Calu3 (cell line): ENCODE measurements at regions of chr13 and their contacts with region 1.

Region 1: DNA sequence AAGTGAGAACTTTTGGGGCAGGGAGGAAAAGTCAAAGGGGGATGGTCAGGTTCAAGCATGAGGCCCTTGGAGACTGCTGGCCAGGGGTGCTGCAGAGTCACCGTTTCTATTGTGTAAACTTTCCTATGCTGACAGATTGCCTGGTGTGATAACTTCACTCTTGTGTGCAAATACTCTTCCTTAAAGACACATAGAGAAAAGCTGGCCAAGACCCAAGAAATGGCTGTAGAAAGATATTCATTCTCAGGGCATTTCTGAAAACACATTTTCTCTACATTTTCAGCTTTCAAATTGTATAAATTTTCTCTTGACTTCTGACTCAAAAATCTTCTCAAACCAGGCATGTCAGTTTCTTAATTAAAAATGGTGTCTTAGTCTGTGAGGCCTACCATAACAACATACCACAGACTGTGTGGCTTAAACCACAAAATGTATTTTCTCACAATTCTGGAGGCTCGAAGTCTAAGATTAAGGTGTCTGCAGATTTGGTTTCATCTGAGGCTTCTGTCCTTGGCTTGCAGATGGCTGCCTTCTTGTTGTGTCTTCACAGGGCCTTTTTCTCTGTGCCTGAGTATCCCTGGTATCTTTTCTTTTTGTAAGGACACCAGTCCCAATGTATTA is 304.5 kb downstream of the KCNRG start:
- DNase-seq: no peak
- H3K4me3 Mint-ChIP-seq: peak overlapping the region; percentile 17
- H3K27ac Mint-ChIP-seq: peak overlapping the region; percentile 50
- H3K4me1 Mint-ChIP-seq: peaks cover 23% of the 10 kb centered on the region
- H3K27me3 Mint-ChIP-seq: no peaks in the 10 kb centered on the region
- CTCF ChIP-seq: no peak

Region 2: GRCh38 chr13:50244713-50245574 is 74.8 kb before region 1 on chr13:
- CTCF ChIA-PET with region 1: no interaction called
- intact Hi-C with region 1: loop called (anchors 2 kb)
- DNase-seq: peak; percentile 59
- H3K4me3 Mint-ChIP-seq: no peak overlapping the region
- H3K27ac Mint-ChIP-seq: peak overlapping the region; percentile 75
- H3K4me1 Mint-ChIP-seq: peaks cover 39% of the 10 kb centered on the region
- H3K27me3 Mint-ChIP-seq: no peaks in the 10 kb centered on the region
- CTCF ChIP-seq: no peak